HCT116 (cell line): ENCODE measurements at regions of chr4 and their contacts with region 1.

Region 1: GRCh38 chr4:154618708-154619315 is 6.4 kb upstream of the FGG start:
- DNase-seq: peak; percentile 51
- ATAC-seq: peak; percentile 89
- H3K4me3 ChIP-seq: no peak overlapping the region
- H3K27ac ChIP-seq: no peak overlapping the region
- H3K4me1 ChIP-seq: peaks cover 0 to 3% of the 10 kb centered on the region in 2 experiments; a peak in 1 of 4 replicates
- H3K27me3 ChIP-seq: no peaks in the 10 kb centered on the region
- CTCF ChIP-seq: peak; percentile 77 to 83 (median 81)
- POLR2A ChIP-seq: no peak
- RAD21 ChIP-seq: peak; percentile 83

Region 2: GRCh38 chr4:152956650-152957436 is 1662.0 kb before region 1 on chr4:
- CTCF ChIA-PET with region 1: no interaction called
- POLR2A ChIA-PET with region 1: no interaction called
- RAD21 ChIA-PET with region 1: no interaction called
- intact Hi-C with region 1: no loop called
- DNase-seq: no peak
- ATAC-seq: no peak
- H3K4me3 ChIP-seq: no peak overlapping the region
- H3K27ac ChIP-seq: no peak overlapping the region
- H3K4me1 ChIP-seq: peaks cover 0 to 10% of the 10 kb centered on the region in 2 experiments; a peak in 2 of 4 replicates
- H3K27me3 ChIP-seq: no peaks in the 10 kb centered on the region
- CTCF ChIP-seq: no peak
- POLR2A ChIP-seq: no peak
- RAD21 ChIP-seq: no peak

Region 3: DNA sequence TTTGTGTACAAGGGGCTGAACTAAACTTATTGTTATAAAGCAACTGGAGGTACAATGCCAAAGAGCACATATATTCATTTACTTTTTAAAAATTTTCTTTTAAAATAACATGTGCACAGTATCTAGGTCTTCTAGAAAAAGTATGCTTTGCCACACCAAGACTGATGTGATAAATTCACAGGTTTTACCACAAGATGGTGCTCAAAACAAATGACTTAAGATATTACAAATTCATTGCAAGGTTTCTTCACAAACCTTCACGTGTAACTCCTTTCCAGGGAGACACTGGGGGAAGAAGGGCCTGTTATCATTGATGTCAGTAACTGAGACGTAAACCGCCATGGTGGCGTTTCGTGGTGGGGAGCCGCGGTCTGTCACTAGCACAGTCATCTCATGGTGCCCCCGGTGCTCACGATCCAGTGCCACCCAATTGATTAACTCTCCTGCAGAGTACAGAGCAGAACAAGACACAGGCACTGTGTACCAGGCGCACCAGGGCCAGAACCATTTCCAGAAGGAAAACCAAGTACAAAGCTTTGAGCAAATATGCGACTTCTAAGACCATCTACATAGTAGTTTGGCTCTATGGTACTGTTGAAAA is 289.4 kb before region 1 on chr4:
- CTCF ChIA-PET with region 1: interaction called, 7 read pairs
- POLR2A ChIA-PET with region 1: no interaction called
- RAD21 ChIA-PET with region 1: no interaction called
- intact Hi-C with region 1: loop called (anchors 2 kb)
- DNase-seq: no peak
- ATAC-seq: peak; percentile 86
- H3K4me3 ChIP-seq: no peak overlapping the region
- H3K27ac ChIP-seq: no peak overlapping the region
- H3K4me1 ChIP-seq: no peaks in the 10 kb centered on the region
- H3K27me3 ChIP-seq: no peaks in the 10 kb centered on the region
- CTCF ChIP-seq: peak; percentile 39 to 58 (median 55); a peak in 5 of 6 replicates
- POLR2A ChIP-seq: no peak
- RAD21 ChIP-seq: peak; percentile 63

Region 4: DNA sequence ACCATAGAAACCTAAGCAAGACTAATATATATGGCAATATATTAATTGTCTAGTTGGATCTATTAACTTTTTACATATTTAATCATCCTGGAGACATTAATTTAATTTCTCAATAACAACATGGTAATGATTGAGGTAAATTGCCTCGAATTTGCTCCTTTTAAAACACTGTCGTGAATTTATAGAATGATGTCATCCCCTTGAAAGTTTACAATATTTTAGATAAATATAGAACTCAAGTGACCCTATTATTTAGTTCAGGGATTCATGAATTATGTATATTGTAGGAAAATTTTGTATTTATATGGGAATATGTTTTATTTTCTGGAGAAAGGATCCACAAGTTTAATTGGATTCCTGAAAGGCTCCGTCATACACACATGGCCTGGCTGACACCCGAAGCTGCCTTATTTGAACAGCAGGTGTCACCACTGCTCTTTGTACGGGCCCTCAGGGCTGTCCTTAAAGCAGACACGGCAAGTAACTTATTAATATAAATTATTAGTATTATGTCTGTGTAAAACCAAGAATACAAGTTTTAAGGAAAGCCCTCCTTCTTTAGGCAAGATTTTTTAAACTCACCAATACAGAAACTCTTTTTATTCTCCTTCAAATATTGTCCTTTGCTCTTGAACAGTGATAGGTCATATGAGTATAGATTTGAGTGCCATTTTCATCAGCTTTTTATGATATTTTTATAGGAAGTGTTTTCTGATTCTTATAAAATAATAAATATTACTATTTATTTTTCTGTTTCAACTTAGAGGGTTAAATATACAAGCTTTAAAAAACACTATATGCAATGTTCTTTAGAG is 66.7 kb before region 1 on chr4:
- CTCF ChIA-PET with region 1: interaction called, 175 read pairs
- POLR2A ChIA-PET with region 1: interaction called, 6 read pairs
- RAD21 ChIA-PET with region 1: interaction called, 6 to 7 read pairs
- intact Hi-C with region 1: loop called (anchors 1 kb)
- DNase-seq: peak; percentile 79
- ATAC-seq: peak; percentile 66
- H3K4me3 ChIP-seq: no peak overlapping the region
- H3K27ac ChIP-seq: no peak overlapping the region
- H3K4me1 ChIP-seq: peaks cover 2 to 12% of the 10 kb centered on the region in 2 experiments; a peak in 3 of 4 replicates
- H3K27me3 ChIP-seq: no peaks in the 10 kb centered on the region
- CTCF ChIP-seq: peak; percentile 68 to 83 (median 83)
- POLR2A ChIP-seq: no peak
- RAD21 ChIP-seq: peak; percentile 86

Region 5: GRCh38 chr4:154602404-154603020 is 16.3 kb before region 1 on chr4:
- CTCF ChIA-PET with region 1: interaction called, 17 read pairs
- POLR2A ChIA-PET with region 1: no interaction called
- RAD21 ChIA-PET with region 1: no interaction called
- intact Hi-C with region 1: no loop called
- DNase-seq: no peak
- ATAC-seq: peak; percentile 36
- H3K4me3 ChIP-seq: no peak overlapping the region
- H3K27ac ChIP-seq: no peak overlapping the region
- H3K4me1 ChIP-seq: peaks cover 3 to 11% of the 10 kb centered on the region in 2 experiments; a peak in 3 of 4 replicates
- H3K27me3 ChIP-seq: no peaks in the 10 kb centered on the region
- CTCF ChIP-seq: no peak
- POLR2A ChIP-seq: no peak
- RAD21 ChIP-seq: no peak